Heart left ventricle (tissue), 16 donors: ENCODE measurements at regions of chr7 and their contacts with region 1.

Region 1: GRCh38 chr7:992709-993607 is 10.0 kb downstream of the CYP2W1 start:
- DNase-seq: peak; percentile 97 to 99 (median 97)
- ATAC-seq: peak; percentile 93 to 99 (median 97)
- H3K4me3 ChIP-seq: no peak overlapping the region
- H3K27ac ChIP-seq: no peak overlapping the region
- H3K4me1 ChIP-seq: peaks cover 0 to 29% (median 9%) of the 10 kb centered on the region in 12 donors
- H3K27me3 ChIP-seq: peaks cover 0 to 10% (median 7%) of the 10 kb centered on the region in 9 donors
- CTCF ChIP-seq: peak; percentile 99 to 100 (median 100)
- POLR2A ChIP-seq: no peak

Region 2: GRCh38 chr7:179209-179681 is 813.7 kb before region 1 on chr7:
- intact Hi-C with region 1: no loop called
- DNase-seq: peak; percentile 42 to 82 (median 69)
- ATAC-seq: peak; percentile 70 to 78 (median 72)
- H3K4me3 ChIP-seq: peak overlapping the region in 1 of 12 donors; percentile 15
- H3K27ac ChIP-seq: peak overlapping the region in 10 of 12 donors; percentile 26 to 72 (median 46)
- H3K4me1 ChIP-seq: peaks cover 0 to 27% (median 9%) of the 10 kb centered on the region in 12 donors
- H3K27me3 ChIP-seq: no peaks in the 10 kb centered on the region
- CTCF ChIP-seq: no peak
- POLR2A ChIP-seq: no peak

Region 3: GRCh38 chr7:749140-749551 is 243.8 kb before region 1 on chr7:
- intact Hi-C with region 1: no loop called
- DNase-seq: peak in 3 of 5 donors; percentile 62 to 74 (median 70)
- ATAC-seq: peak; percentile 47 to 76 (median 72)
- H3K4me3 ChIP-seq: no peak overlapping the region
- H3K27ac ChIP-seq: peak overlapping the region in 10 of 12 donors; percentile 31 to 67 (median 58)
- H3K4me1 ChIP-seq: peaks cover 0 to 38% (median 12%) of the 10 kb centered on the region in 12 donors
- H3K27me3 ChIP-seq: no peaks in the 10 kb centered on the region
- CTCF ChIP-seq: no peak
- POLR2A ChIP-seq: no peak

Region 4: GRCh38 chr7:855686-856369 is 137.1 kb before region 1 on chr7:
- intact Hi-C with region 1: no loop called
- DNase-seq: no peak
- ATAC-seq: peak in 1 of 4 donors; percentile 6
- H3K4me3 ChIP-seq: no peak overlapping the region
- H3K27ac ChIP-seq: no peak overlapping the region
- H3K4me1 ChIP-seq: peaks cover 0 to 10% (median 0%) of the 10 kb centered on the region in 12 donors
- H3K27me3 ChIP-seq: no peaks in the 10 kb centered on the region
- CTCF ChIP-seq: no peak
- POLR2A ChIP-seq: no peak

Region 5: GRCh38 chr7:1028031-1028770 is 35.2 kb after region 1 on chr7:
- intact Hi-C with region 1: loop called in 1 of 10 experiments (anchors 1 kb)
- DNase-seq: peak; percentile 93 to 96 (median 94)
- ATAC-seq: peak; percentile 81 to 95 (median 93)
- H3K4me3 ChIP-seq: peak overlapping the region; percentile 64 to 98 (median 84)
- H3K27ac ChIP-seq: peak overlapping the region; percentile 45 to 97 (median 92)
- H3K4me1 ChIP-seq: peaks cover 4 to 39% (median 15%) of the 10 kb centered on the region in 12 donors
- H3K27me3 ChIP-seq: no peaks in the 10 kb centered on the region
- CTCF ChIP-seq: no peak
- POLR2A ChIP-seq: peak in 1 of 2 donors; percentile 65

Region 6: GRCh38 chr7:1065263-1066260 is 72.6 kb after region 1 on chr7:
- intact Hi-C with region 1: loop called (anchors 1 to 2 kb)
- DNase-seq: peak; percentile 84 to 93 (median 86)
- ATAC-seq: peak; percentile 81 to 97 (median 93)
- H3K4me3 ChIP-seq: peak overlapping the region in 10 of 12 donors; percentile 12 to 50 (median 26)
- H3K27ac ChIP-seq: no peak overlapping the region
- H3K4me1 ChIP-seq: peaks cover 2 to 22% (median 18%) of the 10 kb centered on the region in 12 donors
- H3K27me3 ChIP-seq: no peaks in the 10 kb centered on the region
- CTCF ChIP-seq: peak; percentile 89 to 99 (median 96)
- POLR2A ChIP-seq: peak in 1 of 2 donors; percentile 21

Region 7: DNA sequence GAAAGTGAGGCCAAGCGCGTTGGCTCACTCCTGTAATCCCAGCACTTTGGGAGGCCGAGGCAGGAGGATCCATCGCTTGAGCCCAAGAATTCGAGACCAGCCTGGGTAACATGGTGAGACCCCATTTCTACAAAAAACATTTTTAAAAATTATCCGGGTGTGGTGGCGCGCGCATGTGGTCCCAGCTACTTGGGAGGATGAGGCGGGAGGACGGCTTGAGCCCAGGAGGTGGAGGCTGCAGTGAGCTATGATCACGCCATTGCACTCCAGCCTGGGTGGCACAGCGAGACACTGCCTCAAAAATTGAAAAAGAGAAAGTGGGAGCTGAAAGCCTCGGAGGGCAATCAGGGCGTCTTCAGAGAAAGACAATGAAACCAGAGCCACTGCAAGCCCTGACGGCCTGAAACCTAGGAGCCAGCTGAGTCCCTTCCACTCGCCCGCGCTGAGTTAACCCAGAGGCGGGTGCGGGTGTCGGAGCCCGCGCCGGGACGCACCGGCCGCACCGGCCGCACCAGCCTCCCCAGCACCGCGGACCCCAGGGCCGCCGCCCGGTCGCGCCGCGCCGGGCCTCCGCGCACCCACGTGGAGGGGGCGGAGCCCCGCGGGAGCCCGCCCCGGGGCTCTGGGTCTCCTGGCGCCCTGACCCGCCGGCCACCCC is 144.7 kb after region 1 on chr7:
- intact Hi-C with region 1: loop called in 2 of 10 experiments (anchors 5 to 10 kb)
- DNase-seq: no peak
- ATAC-seq: peak; percentile 24 to 90 (median 66)
- H3K4me3 ChIP-seq: peak overlapping the region; percentile 60 to 93 (median 82)
- H3K27ac ChIP-seq: peak overlapping the region in 11 of 12 donors; percentile 52 to 87 (median 69)
- H3K4me1 ChIP-seq: peaks cover 0 to 19% (median 13%) of the 10 kb centered on the region in 12 donors
- H3K27me3 ChIP-seq: no peaks in the 10 kb centered on the region
- CTCF ChIP-seq: no peak
- POLR2A ChIP-seq: no peak

Region 8: DNA sequence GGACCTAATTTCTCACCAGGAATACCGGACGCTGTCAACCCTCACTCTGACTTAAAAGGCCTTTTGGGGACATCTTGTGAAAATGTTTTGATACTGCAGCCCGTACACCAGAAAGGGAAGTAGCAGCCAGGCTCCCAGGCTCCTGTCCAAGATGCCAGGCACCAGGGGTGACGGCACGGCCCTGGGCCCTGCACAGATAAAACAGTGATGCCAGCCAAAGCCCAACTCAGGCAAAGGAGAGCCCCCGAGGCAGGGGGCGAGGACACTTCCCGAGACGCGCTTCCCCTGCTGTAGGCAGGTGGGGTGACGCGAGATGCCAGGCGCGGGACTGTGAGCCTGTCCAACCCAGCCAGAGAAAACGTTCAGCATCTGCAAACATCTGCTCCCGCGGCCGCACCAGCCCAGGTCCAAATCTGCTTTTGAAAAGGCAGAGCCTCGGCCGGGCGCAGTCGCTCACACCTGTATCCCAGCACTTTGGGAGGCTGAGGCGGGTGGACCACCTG is 151.4 kb after region 1 on chr7:
- intact Hi-C with region 1: loop called in 4 of 10 experiments (anchors 2 to 10 kb)
- DNase-seq: peak in 4 of 5 donors; percentile 56 to 80 (median 68)
- ATAC-seq: peak; percentile 71 to 96 (median 94)
- H3K4me3 ChIP-seq: no peak overlapping the region
- H3K27ac ChIP-seq: peak overlapping the region in 3 of 12 donors; percentile 7 to 49 (median 18)
- H3K4me1 ChIP-seq: peaks cover 0 to 9% (median 2%) of the 10 kb centered on the region in 12 donors
- H3K27me3 ChIP-seq: no peaks in the 10 kb centered on the region
- CTCF ChIP-seq: peak; percentile 13 to 60 (median 41)
- POLR2A ChIP-seq: no peak

Region 9: DNA sequence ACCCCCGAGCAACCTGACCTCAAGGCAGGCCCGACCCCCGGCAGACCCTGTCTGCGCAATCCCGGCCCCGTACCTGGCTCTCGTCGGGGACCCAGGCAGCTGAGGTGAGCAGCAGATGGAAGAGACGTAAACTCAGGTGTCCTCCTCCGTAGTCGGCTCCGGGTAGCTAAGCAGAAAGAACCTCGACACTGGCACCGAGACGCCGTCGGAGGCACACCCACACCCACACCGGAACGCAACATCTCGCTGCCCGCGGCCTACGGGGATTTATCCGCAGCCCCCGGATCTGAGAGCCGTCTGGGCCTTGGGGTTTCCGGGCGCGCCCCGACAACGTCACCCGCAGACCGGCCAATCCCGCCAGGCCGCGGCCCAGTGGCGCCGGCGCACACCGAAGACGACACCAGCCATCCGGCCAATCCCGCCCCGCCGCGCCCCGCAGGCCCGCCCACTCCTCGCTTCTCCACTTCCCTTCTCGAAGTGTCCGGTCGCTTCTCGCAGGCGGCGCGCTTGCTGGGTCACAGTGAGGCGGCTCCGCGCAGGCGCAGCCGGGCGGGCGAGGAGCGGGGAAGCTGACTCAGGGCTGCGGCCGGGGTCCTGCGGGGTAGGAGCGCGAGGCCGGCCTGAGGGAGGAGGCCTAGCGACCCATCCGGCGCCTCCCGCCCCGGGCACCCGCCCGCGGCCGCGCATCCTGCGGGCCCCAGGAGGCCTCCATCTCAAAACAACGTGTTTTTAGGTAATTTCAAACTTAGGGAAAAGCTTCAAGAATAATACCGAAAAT is 167.1 kb after region 1 on chr7 and contains the start of gene ZFAND2A:
- intact Hi-C with region 1: loop called in 2 of 10 experiments (anchors 10 kb)
- DNase-seq: peak; percentile 99 to 100 (median 99)
- ATAC-seq: peak; percentile 97 to 99 (median 99)
- H3K4me3 ChIP-seq: peak within 1 kb of the TSS; percentile 53 to 100 (median 94)
- H3K27ac ChIP-seq: peak within 1 kb of the TSS; percentile 92 to 100 (median 96)
- H3K4me1 ChIP-seq: peaks cover 7 to 26% (median 20%) of the 10 kb centered on the region in 12 donors
- H3K27me3 ChIP-seq: no peaks in the 10 kb centered on the region
- CTCF ChIP-seq: no peak
- POLR2A ChIP-seq: peak; percentile 61 to 92
- total RNA-seq, gene ZFAND2A: 5.6 to 13.7 (median 9.0) TPM

Region 10: DNA sequence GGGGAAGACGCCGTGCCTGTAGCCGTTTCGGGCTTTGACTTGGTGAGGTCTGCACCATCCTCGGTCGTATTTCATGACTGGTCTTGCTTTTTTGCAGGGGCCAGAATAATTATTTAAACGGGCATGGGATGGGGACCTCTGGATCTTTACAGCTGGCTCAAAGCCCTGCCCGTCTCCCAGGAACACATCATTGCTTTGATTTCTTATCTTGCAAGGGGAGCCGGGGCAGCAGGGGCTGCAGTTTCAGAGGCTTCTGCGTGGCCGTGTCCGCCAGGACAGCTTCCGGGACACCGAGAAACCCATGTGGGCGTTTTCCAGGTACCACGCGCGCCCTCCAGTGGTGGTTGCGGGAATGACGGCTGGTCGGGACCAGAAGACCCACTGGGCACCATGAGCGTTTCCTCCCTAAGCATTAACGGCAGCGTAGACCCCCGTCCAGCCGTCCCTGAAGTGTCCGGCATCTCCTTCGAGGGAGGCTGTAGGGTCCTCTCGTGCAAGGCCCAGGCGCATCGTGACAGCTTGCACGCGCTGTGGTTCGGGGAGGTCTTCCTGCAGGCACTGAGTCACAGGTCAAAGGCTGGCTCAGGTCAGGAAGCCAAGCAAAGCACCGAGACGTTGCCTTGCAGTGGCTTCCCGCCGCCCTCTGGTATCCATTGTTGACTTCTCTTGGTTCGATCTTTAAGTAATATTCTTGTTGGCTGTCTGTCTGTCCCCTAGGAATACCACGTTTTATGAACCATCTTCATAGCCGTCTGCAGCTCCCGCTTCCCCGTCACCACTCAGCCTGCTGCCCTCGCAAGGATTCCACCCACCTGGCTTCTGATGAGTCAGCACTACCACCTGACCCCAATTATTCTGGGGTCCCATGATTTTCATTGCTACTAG is 183.3 kb after region 1 on chr7:
- intact Hi-C with region 1: loop called in 4 of 10 experiments (anchors 5 to 10 kb)
- DNase-seq: peak; percentile 71 to 92 (median 81)
- ATAC-seq: peak in 3 of 4 donors; percentile 66 to 85 (median 85)
- H3K4me3 ChIP-seq: peak overlapping the region in 9 of 12 donors; percentile 7 to 39 (median 28)
- H3K27ac ChIP-seq: peak overlapping the region in 2 of 12 donors; percentile 33 to 47
- H3K4me1 ChIP-seq: peaks cover 0 to 13% (median 5%) of the 10 kb centered on the region in 12 donors
- H3K27me3 ChIP-seq: no peaks in the 10 kb centered on the region
- CTCF ChIP-seq: peak; percentile 82 to 95 (median 89)
- POLR2A ChIP-seq: no peak